ENCODE measurements at regions of chr20 and their contacts with region 1.

Region 1: DNA sequence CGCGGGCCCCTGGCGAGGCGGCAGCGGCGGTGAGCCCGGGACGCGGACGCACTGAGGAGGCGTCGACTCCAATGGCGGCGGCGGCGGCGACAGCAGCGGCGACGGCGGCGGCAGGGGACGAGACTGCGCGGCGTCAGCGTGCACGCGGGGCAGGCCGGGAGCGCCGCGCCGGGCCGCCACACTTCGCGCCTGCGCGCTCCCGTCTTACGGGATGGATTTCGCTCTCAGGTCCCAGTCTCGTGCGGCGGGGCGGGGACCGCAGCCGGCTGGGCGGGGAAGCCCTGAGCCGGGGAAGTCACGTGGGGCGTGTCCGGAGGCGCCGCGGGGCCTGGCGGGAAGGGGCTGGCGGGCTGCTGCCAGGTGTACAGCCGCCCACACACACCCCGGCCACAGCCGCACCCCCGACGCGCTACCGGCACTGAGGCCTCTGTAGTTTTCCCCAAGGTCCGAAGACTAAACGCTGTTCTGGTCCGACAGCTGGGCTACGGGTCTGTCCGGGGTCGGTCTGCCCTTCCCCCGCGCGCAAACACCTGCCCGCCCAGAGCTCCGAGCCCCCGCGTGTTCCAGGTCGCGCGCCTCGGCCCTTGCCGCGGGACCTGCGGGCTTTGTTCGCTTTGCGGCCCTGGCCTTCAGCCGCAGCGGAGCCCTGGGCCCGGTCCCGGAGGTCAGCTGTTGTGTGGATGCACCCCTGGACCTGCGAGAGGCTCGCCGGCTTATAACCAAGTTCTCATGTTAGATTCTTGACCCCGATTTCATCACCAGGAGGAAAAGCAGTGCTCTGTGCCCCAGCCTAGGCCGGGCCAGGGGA is at the start of gene YTHDF1:
- DNase-seq: peak; percentile 96
- ATAC-seq: peak; percentile 87
- H3K4me3 Mint-ChIP-seq: peak within 1 kb of the TSS; percentile 89
- H3K27ac Mint-ChIP-seq: peak within 1 kb of the TSS; percentile 84
- H3K4me1 Mint-ChIP-seq: peaks cover 40% of the 10 kb centered on the region
- H3K27me3 Mint-ChIP-seq: peaks cover 4% of the 10 kb centered on the region
- CTCF ChIP-seq: no peak
- total RNA-seq, gene YTHDF1: 32.6 and 34.1 TPM in 2 replicates

Region 2: DNA sequence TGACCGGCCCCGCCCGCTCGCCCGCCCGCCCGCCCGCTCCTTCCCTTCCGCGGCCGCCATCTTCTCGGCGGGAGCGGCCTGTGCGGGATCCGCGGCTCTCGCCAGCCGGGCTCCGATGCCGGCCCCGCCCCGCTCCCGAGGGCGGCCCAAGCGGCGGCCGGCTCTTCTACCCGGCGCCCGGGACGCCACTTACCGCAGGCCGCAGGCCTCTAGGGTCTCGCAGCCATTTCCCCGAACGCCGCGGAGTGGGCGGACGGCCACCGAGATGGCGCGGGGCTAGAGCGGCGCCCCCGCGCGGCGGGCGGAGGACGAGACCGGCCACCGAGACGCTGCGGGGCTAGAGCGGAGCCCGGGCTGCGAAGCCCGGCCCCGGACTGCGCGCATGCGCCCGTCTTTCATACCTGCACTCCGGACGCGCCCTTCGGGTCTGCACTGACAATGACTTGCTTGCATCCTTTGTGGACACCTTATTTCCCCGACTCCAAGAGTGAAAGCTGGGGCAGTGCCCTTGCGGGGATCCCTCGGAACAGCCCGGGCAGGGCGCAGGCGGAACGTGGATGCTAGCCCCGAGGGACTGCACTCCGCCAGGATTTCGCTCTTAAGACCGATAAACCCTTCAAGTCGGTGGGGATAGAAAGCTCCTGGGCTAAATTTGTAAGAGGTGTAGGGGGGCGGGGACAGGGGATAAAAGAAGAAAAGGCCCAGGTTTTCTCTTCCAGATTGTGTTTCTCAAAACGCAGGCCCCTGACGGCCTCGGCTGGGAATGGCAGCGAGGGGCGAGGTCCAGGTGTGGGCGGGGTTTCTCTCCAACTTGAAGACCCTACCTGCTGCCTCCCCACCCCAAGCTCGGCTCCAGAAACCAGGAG is 289.8 kb before region 1 on chr20 and contains the start of gene DIDO1:
- CTCF ChIA-PET with region 1: no interaction called
- POLR2A ChIA-PET with region 1: no interaction called
- intact Hi-C with region 1: no loop called
- DNase-seq: peak; percentile 90
- ATAC-seq: peak; percentile 87
- H3K4me3 Mint-ChIP-seq: peak within 1 kb of the TSS; percentile 97
- H3K27ac Mint-ChIP-seq: peak within 1 kb of the TSS; percentile 93
- H3K4me1 Mint-ChIP-seq: peaks cover 81% of the 10 kb centered on the region
- H3K27me3 Mint-ChIP-seq: no peaks in the 10 kb centered on the region
- CTCF ChIP-seq: no peak
- total RNA-seq, gene DIDO1: 79.2 and 89.1 TPM in 2 replicates

Region 3: DNA sequence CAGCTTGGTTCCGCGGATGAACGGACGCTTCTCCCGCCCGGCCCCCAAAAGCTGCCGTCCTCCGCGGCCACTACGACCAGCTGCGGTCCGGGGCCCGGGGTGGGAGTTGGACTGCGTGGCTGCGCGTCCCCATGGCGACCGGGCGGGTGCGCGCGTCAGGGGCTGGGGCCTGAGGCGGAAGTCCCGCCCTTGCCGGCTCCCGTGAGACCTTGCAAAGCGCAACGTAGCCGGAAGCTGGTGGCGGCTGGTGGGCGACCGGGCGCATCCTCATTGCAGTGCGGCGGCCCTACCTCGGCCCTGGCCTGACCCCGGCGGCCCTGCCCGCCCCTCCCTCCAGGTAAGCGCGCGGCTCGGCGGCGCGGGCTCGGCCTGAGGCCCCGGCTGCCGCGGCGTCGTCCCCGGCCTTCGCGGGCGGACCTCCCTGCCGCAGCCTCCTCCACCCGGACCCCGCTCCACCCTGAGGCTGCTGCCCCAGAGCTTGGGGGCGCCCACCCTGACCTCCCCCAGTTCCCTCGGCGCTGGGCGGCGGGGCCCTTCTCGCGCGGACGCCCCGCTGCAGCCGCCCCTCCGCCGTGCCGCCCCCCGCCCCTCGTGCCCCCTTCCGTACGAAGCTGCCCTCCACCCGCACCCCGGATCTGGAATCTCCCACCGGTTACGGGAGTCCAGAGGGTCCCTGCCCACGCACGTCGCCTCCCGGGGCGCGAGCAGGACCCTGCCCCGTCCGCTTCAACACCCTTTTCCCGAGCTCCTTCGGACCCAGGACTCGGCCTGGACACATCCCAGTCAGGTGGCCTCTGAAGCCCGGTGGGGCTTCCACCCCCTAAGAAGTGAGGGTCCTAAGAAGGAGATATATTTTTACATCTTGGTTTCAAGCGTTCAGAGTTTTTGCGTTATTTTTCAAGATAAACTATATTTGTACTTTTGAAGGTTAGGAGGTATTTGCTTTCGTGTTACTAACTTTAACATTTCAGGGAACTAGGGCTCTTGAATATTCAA is 56.6 kb after region 1 on chr20 and contains the start of gene ARFGAP1:
- CTCF ChIA-PET with region 1: no interaction called
- POLR2A ChIA-PET with region 1: interaction called, 4 read pairs
- intact Hi-C with region 1: loop called (anchors 1 kb)
- DNase-seq: peak; percentile 94
- ATAC-seq: peak; percentile 94
- H3K4me3 Mint-ChIP-seq: peak within 1 kb of the TSS; percentile 86
- H3K27ac Mint-ChIP-seq: peak within 1 kb of the TSS; percentile 66
- H3K4me1 Mint-ChIP-seq: peaks cover 21% of the 10 kb centered on the region
- H3K27me3 Mint-ChIP-seq: no peaks in the 10 kb centered on the region
- CTCF ChIP-seq: no peak
- total RNA-seq, gene ARFGAP1: 72.4 and 85.8 TPM in 2 replicates

Region 4: DNA sequence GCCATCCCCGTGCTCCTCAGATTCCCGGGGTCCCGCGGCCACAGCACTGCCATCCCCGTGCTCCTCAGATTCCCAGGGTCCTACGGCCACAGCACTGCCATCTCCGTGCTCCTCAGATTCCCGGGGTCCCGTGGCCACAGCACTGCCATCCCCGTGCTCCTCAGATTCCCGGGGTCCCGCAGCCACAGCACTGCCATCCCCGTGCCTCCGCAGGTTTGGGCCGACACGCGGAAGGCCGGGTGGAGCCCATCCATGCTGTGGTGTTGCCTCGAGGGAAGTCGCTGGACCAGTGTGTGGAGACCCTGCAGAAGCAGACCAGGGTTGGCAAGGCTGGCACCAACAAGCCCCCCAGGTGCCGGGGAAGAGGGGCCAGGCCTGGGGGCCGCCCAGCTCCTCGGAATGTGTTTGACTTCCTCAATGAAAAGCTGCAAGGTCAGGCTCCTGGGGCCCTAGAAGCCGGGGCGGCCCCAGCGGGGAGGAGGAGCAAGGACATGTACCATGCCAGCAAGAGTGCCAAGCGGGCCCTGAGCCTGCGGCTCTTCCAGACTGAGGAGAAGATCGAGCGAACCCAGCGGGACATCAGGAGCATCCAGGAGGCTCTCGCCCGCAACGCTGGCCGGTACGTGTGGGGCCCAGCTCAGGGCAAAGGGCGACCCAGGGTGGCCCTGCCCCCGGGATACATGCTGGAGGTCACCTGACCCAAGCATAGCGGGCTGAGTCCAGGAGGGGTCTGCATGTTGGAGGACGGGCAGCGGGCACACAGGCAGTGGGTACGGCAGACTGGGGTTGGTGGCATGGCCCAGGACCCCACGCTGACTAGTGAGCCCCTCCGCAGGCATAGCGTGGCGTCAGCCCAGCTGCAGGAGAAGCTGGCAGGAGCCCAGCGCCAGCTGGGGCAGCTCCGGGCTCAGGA is 519.0 kb after region 1 on chr20:
- CTCF ChIA-PET with region 1: no interaction called
- POLR2A ChIA-PET with region 1: no interaction called
- intact Hi-C with region 1: no loop called
- DNase-seq: no peak
- ATAC-seq: no peak
- H3K4me3 Mint-ChIP-seq: no peak overlapping the region
- H3K27ac Mint-ChIP-seq: no peak overlapping the region
- H3K4me1 Mint-ChIP-seq: peaks cover 28% of the 10 kb centered on the region
- H3K27me3 Mint-ChIP-seq: no peaks in the 10 kb centered on the region
- CTCF ChIP-seq: no peak